Kidney (tissue), 22 donors: ENCODE measurements at regions of chr17 and their contacts with region 1.

Region 1: DNA sequence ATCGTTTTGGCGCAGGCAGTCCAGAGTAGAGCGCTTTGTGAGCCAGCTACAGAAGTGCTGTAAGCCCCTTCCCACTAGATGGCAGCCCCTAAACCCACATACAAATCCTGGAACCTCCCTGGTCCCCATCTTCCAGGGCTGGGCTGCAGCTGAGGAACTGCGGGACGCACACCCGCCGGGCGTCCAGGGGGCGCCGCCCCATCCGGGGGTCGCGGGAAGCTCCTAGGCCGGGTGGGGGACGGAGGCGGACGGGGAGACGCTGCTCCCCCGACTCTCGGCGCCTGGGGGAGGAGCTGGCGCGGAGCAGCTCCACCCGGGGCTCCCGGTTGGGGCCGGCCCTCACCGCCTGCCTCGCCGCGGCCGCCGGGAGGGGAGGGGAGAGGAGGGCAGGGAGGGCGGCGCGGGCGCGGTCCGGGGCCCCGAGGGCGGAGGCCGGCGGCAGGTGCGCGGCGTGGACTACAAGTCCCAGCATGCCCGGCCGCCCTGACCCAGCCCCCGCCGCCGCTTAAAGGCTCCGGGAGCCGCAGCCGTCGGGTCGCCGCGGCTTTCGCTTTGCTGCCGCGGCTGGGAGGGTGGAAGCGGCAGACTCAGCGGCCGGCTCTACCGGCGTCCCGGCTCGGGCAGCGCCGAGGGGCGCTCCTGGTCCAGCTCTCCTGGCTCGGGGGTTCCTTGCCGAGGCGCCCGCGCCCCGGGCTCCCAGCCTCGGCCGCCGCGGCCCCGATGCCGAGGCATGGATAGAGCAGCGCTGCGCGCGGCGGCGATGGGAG is at the start of gene KSR1:
- DNase-seq: peak; percentile 87 to 96 (median 92)
- H3K4me3 ChIP-seq: peak within 1 kb of the TSS; percentile 58 to 78 (median 67)
- H3K27ac ChIP-seq: peak within 1 kb of the TSS; percentile 65 to 76
- H3K4me1 ChIP-seq: peaks cover 2 to 28% (median 25%) of the 10 kb centered on the region in 3 donors
- H3K27me3 ChIP-seq: no peaks in the 10 kb centered on the region
- CTCF ChIP-seq: peak; percentile 43
- total RNA-seq, gene KSR1: 97.3 TPM

Region 2: GRCh38 chr17:27381007-27381501 is 75.0 kb before region 1 on chr17:
- intact Hi-C with region 1: loop called (anchors 10 kb)
- DNase-seq: peak in 4 of 5 donors; percentile 37 to 86 (median 58)
- H3K4me3 ChIP-seq: peak overlapping the region in 1 of 3 donors; percentile 48
- H3K27ac ChIP-seq: no peak overlapping the region
- H3K4me1 ChIP-seq: peaks cover 0 to 13% (median 7%) of the 10 kb centered on the region in 3 donors
- H3K27me3 ChIP-seq: no peaks in the 10 kb centered on the region
- CTCF ChIP-seq: peak; percentile 71

Region 3: DNA sequence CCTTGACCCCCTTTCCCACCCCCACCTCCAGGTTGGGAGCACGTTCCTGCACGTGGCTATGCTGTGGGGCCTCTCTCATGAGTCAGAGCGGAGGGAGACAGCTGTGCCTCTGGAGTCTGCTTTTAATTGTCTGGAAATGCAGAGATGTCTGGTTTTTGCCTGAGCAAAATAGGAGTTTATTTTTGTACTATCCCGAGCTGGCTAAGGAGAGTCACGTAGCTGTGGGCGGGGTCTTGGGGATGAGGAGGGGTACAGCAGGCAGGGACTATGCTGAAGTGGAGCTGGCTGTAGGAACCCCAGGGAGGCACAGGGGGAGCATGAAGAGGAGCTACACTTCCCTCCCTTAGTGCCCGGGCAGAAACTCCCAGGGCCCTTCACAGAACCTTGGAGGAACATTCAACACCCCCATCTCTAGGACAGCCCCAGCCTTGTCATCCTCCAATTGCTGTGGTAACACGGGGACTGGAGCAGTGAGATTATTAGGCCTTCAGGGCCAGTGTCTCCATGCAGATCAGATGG is 130.2 kb after region 1 on chr17:
- intact Hi-C with region 1: loop called (anchors 10 kb)
- DNase-seq: no peak
- H3K4me3 ChIP-seq: no peak overlapping the region
- H3K27ac ChIP-seq: no peak overlapping the region
- H3K4me1 ChIP-seq: no peaks in the 10 kb centered on the region
- H3K27me3 ChIP-seq: no peaks in the 10 kb centered on the region
- CTCF ChIP-seq: no peak